T-cell (primary cell): ENCODE measurements at regions of chr7 and their contacts with region 1.

Region 1: GRCh38 chr7:31098642-31099360 is 46.7 kb downstream of the ADCYAP1R1 start:
- DNase-seq: no peak
- ATAC-seq: no peak
- H3K4me3 ChIP-seq: no peak overlapping the region
- H3K4me3 Mint-ChIP-seq: no peak overlapping the region
- H3K27ac ChIP-seq: no peak overlapping the region
- H3K27ac Mint-ChIP-seq: no peak overlapping the region
- H3K4me1 ChIP-seq: no peaks in the 10 kb centered on the region
- H3K4me1 Mint-ChIP-seq: no peaks in the 10 kb centered on the region
- H3K27me3 ChIP-seq: peaks cover 0 to 21% of the 10 kb centered on the region in 2 experiments
- H3K27me3 Mint-ChIP-seq: peaks cover 8 to 10% of the 10 kb centered on the region in 2 donors

Region 2: DNA sequence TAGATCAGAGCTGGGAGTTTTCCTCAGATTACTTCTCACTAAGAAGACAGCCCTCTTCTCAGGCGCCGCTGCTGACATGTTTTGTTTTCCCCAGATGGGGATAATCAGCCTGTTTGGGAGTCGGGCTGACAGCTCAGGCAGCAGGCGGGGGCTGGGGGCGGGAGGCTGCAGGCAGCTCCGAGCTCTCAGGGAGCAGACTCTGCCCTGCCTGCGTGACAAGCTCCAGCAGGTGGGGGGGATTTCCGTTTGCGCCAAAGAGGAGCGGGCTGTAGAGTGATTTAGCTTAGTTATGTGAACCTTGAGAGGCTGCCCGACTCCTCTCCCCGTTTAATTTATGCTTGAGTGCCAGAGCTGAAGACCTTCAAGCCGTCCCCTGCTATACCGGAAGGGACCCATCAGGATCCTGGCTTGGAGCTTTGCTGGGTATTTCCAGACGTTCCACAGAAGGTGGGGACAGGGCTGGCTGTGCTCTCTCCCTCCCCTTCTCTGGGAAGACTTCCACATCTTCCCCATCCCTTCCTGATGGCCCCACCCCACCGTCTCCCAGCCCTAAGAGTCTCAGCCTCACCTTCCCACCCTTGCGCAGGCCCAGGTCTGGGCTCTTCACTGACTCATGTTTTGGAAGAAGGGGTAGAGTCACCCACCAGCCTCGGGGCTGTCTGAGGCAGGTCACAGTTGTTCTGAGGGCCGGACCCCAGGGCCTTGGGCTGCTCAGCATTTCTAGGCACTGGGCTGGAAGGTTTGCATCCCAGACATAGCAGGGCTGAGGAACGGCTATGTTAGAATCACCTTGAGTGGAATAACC is 71.4 kb before region 1 on chr7:
- CTCF ChIA-PET with region 1: interaction called in 1 of 2 experiments, 13 read pairs
- POLR2A ChIA-PET with region 1: no interaction called
- DNase-seq: peak in 3 of 35 experiments; percentile 4 to 9 (median 5)
- ATAC-seq: peak in 1 of 4 experiments; percentile 43
- H3K4me3 ChIP-seq: no peak overlapping the region
- H3K4me3 Mint-ChIP-seq: peak overlapping the region in 1 of 3 donors; percentile 44
- H3K27ac ChIP-seq: no peak overlapping the region
- H3K27ac Mint-ChIP-seq: no peak overlapping the region
- H3K4me1 ChIP-seq: peaks cover 0 to 23% of the 10 kb centered on the region in 2 experiments
- H3K4me1 Mint-ChIP-seq: peaks cover 23 to 37% (median 26%) of the 10 kb centered on the region in 3 donors
- H3K27me3 ChIP-seq: peaks cover 0 to 29% of the 10 kb centered on the region in 2 experiments
- H3K27me3 Mint-ChIP-seq: peaks cover 0 to 14% of the 10 kb centered on the region in 2 donors